ENCODE measurements at regions of chrX and their contacts with region 1.

Region 1: GRCh38 chrX:120250522-120251271 is at the start of gene ZBTB33:
- DNase-seq: peak; percentile 91
- H3K4me3 ChIP-seq: peak within 1 kb of the TSS; percentile 32 to 83 (median 67)
- H3K27ac ChIP-seq: peak within 1 kb of the TSS; percentile 87 to 98 (median 96)
- H3K4me1 ChIP-seq: peaks cover 0 to 10% (median 0%) of the 10 kb centered on the region in 4 donors
- H3K27me3 ChIP-seq: no peaks in the 10 kb centered on the region
- CTCF ChIP-seq: peak; percentile 47 to 89 (median 62)
- EP300 ChIP-seq: no peak
- POLR2A ChIP-seq: peak; percentile 88
- total RNA-seq, gene ZBTB33: 5.6 to 16.1 (median 10.0) TPM

Region 2: DNA sequence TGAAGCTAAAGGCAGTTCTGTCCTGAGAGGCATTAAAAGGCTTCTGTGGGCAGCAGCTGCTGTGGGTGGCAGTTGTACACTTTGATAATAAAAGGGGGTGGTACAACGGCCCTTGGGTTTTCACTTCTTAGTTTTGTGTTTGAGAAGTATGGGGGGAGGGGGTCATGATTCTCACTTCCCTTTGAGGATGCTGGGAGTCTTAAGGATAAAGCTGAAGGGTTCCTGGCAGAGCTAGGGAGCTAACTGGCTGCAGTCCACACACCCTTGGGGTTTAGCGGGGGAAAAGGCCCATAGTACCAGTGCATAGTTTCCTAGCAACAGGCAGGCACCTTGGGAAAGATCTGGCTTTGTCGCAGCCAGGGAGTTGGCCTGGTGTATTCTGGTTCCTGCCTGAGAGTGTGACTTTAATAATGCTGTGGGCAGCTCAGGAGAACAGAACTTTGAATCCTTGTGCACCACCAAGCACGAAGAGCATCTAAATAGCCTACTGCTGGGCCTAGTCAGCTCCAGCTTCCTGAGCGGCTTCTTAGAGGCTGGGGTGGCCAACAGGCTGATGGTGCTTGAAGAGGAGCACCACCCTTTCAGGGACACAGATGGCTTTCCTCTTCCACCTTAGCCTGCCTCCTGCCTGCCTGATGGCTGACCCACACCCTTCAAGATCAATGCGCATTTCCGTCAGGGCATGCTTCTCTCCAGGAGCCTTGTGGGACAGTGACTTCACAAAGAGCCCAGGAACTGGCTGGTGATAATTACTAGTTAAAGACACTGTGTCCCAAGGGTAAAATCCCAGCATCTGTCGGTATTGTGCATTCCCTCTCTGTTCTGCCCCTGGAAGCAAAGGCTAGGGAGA is 12.4 kb after region 1 on chrX:
- in situ Hi-C with region 1: no loop called
- intact Hi-C with region 1: no loop called
- DNase-seq: no peak
- H3K4me3 ChIP-seq: no peak overlapping the region
- H3K27ac ChIP-seq: no peak overlapping the region
- H3K4me1 ChIP-seq: no peaks in the 10 kb centered on the region
- H3K27me3 ChIP-seq: no peaks in the 10 kb centered on the region
- CTCF ChIP-seq: no peak
- EP300 ChIP-seq: no peak
- POLR2A ChIP-seq: no peak

Region 3: DNA sequence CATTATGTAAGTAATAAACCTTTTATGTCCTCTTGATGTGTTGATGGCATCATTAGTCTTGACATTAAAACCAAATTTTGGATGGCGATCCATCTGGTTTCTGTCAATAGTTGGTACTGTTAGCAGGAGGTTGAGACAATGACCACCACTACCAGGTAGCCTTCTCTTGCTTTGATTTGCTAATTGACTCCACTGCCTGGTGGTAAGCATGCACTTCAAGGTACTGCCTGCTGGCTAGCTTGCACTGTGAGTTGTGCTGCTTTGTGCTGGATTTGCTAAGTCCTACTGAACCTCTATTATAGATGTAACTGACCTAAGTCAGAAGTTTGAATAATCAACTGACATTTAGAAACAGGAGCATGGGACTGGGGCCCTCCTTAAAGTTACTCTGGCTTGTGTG is 157.5 kb after region 1 on chrX:
- in situ Hi-C with region 1: no loop called
- intact Hi-C with region 1: no loop called
- DNase-seq: no peak
- H3K4me3 ChIP-seq: no peak overlapping the region
- H3K27ac ChIP-seq: no peak overlapping the region
- H3K4me1 ChIP-seq: no peaks in the 10 kb centered on the region
- H3K27me3 ChIP-seq: no peaks in the 10 kb centered on the region
- CTCF ChIP-seq: no peak
- EP300 ChIP-seq: no peak
- POLR2A ChIP-seq: no peak

Region 4: DNA sequence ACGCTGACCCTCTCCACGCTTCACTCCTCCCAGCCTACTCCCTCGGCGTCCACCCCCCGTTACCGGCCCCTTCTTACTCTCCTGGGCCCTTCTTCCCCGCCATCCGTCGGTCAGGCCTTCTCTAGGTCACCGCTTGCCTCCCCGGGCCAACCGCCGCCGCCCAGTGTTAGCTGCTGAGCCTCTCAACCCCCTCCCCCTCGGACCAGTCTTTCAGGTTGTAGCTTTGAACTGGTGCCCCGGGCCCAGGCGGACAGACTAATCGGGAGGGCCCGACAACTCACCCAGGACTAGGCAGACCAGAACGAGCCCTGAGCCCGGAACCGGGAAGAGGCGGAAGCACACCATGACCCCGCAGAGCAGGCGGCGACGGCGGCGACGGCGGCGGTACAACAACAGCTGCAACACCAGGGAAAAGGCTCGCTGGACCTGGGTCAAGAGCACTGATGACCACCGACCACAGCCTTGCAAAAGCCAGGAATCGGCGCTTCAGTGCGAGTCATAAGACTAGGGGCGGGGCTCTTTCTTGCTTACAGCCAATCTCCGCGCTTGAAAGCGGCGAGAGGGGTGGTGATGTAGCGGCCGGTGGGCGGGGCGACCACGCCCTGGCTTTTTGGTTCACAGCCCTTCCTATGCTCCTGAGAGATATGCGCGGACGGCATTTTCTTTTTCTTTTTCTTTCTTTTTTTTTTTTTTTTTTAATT is 218.3 kb after region 1 on chrX and contains the start of gene LAMP2:
- in situ Hi-C with region 1: loop called in 1 of 4 experiments (anchors 25 kb)
- intact Hi-C with region 1: loop called (anchors 10 kb)
- DNase-seq: peak; percentile 90
- H3K4me3 ChIP-seq: peak within 1 kb of the TSS; percentile 50 to 71 (median 68)
- H3K27ac ChIP-seq: peak within 1 kb of the TSS; percentile 86 to 93 (median 90)
- H3K4me1 ChIP-seq: peaks cover 0 to 10% (median 3%) of the 10 kb centered on the region in 4 donors
- H3K27me3 ChIP-seq: no peaks in the 10 kb centered on the region
- CTCF ChIP-seq: no peak
- EP300 ChIP-seq: no peak
- POLR2A ChIP-seq: peak; percentile 78
- total RNA-seq, gene LAMP2: 44.6 to 93.8 (median 66.0) TPM

Region 5: GRCh38 chrX:120755066-120755846 is 504.6 kb after region 1 on chrX:
- in situ Hi-C with region 1: no loop called
- intact Hi-C with region 1: loop called (anchors 10 kb)
- DNase-seq: peak; percentile 47
- H3K4me3 ChIP-seq: no peak overlapping the region
- H3K27ac ChIP-seq: no peak overlapping the region
- H3K4me1 ChIP-seq: no peaks in the 10 kb centered on the region
- H3K27me3 ChIP-seq: no peaks in the 10 kb centered on the region
- CTCF ChIP-seq: no peak
- EP300 ChIP-seq: no peak
- POLR2A ChIP-seq: no peak